Left ventricle myocardium superior (tissue), 1 donor: ENCODE measurements at regions of chr12 and their contacts with region 1.

Region 1: GRCh38 chr12:121678716-121679580 is 9.5 kb upstream of the MORN3 start:
- DNase-seq: no peak
- ATAC-seq: no peak

Region 2: DNA sequence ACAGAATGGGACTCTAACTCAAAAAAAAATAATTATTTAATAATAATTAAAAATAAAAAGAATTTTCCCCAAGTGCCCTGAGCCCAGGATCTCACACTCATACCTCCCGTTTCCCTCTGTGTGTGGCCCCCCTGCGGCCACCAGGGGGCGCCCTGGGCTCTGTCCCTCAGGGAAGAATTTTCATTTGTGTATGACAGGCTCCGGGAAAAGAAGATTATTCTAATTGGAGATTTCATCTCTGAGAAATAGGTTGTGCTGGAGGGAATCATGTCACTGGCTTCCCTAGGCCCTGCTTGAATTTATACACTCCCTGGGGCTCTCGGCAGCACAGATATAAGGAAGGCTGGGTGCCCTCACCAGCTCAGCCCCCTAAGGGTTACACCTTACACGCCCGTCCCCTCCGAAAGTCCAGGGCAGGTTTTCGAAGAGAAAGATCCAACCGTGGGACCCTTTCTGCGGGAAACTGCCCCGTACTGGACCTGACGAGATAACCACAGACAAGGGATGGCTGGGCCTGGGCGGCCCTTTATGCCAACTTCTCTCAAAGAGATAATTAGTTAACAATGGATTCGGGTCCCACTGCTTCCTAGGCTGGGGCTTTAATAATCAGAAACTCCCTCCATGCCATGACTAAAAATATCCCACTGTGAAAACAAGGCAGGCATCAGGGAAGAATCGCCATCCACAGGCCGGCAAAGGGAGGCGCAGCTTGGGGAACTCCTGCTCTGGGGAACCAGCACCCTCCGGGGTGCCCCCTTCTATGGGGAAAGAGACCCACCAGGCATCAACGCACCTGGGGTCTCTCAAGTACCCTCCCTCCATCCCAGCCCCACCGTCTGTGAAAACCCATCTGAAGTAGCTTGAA is 178.8 kb before region 1 on chr12:
- intact Hi-C with region 1: loop called (anchors 5 kb)
- DNase-seq: peak; percentile 90
- ATAC-seq: peak; percentile 88

Region 3: GRCh38 chr12:121550974-121551634 is 127.8 kb before region 1 on chr12:
- intact Hi-C with region 1: loop called (anchors 5 kb)
- DNase-seq: no peak
- ATAC-seq: no peak